IMR-90 (cell line): ENCODE measurements at regions of chr19 and their contacts with region 1.

Region 1: DNA sequence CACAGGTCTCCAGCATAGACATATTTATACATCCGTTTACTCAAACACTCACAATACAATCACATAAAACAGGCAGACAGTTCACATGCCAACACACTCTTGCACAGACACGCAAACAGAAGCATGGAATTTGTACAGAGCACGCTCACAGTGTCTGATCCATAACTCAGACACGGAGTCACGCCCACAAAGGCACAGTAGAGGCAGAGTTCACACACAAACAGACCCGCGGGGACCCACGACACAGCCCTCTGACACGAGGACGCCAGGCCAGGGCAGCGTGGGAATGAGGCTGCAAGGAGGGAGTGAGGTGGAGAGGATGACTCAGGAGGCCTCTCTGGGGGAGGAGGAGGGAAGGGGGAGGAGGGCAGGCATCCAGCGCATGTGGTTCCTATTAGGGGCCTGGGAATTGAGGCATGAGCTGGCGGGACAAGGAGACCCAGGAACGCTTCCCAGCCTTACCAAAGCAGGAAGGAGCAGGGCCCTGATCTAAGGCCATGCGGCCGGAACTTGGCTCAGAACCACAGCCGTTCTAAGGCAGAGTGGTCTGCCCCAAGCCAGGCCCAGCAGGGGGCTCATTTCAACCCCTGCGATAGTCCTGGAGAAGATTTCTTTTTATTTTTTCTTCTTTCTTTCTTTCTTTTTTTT is 9.1 kb upstream of the OLFM2 start:
- DNase-seq: peak; percentile 100
- ATAC-seq: peak; percentile 95
- H3K4me3 ChIP-seq: no peak overlapping the region
- H3K27ac ChIP-seq: peak overlapping the region; percentile 84
- H3K4me1 ChIP-seq: peaks cover 10% of the 10 kb centered on the region; the same call in 1 of the 2 replicates
- H3K27me3 ChIP-seq: no peaks in the 10 kb centered on the region
- CTCF ChIP-seq: peak; percentile 46
- POLR2A ChIP-seq: no peak
- RAD21 ChIP-seq: peak; percentile 35

Region 2: DNA sequence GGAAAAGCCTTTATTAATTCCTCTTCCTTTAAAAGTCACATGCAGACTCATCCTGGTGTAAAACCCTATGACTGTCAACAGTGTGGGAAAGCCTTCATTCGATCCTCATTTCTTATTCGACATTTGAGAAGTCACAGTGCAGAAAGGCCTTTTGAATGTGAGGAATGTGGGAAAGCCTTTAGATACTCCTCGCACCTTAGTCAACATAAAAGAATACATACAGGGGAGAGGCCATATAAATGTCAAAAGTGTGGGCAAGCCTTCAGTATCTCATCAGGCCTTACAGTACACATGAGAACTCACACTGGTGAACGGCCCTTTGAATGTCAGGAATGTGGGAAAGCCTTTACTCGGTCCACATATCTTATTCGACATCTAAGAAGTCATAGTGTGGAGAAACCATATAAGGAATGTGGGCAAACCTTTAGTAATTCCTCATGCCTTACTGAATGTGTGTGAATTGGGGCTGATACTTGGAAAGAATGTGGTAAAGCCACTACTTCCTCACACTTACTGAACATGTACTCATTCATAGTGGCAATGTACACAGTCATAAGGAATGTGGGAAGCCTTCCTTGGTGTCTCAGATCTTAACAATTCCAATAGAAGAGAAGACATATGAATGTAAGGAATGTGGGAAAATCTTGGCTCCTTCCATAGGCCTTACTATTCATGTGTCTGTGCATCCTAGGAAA is 602.7 kb before region 1 on chr19:
- CTCF ChIA-PET with region 1: no interaction called
- POLR2A ChIA-PET with region 1: no interaction called
- dilution Hi-C with region 1: no loop called
- in situ Hi-C with region 1: no loop called
- intact Hi-C with region 1: no loop called
- DNase-seq: no peak
- ATAC-seq: no peak
- H3K4me3 ChIP-seq: no peak overlapping the region
- H3K27ac ChIP-seq: no peak overlapping the region
- H3K4me1 ChIP-seq: no peaks in the 10 kb centered on the region
- H3K27me3 ChIP-seq: no peaks in the 10 kb centered on the region
- CTCF ChIP-seq: no peak
- POLR2A ChIP-seq: no peak
- RAD21 ChIP-seq: no peak

Region 3: GRCh38 chr19:9528757-9529336 is 416.6 kb before region 1 on chr19:
- CTCF ChIA-PET with region 1: no interaction called
- POLR2A ChIA-PET with region 1: no interaction called
- dilution Hi-C with region 1: no loop called
- in situ Hi-C with region 1: no loop called
- intact Hi-C with region 1: no loop called
- DNase-seq: peak; percentile 9
- ATAC-seq: no peak
- H3K4me3 ChIP-seq: no peak overlapping the region
- H3K27ac ChIP-seq: no peak overlapping the region
- H3K4me1 ChIP-seq: no peaks in the 10 kb centered on the region
- H3K27me3 ChIP-seq: no peaks in the 10 kb centered on the region
- CTCF ChIP-seq: no peak
- POLR2A ChIP-seq: no peak
- RAD21 ChIP-seq: no peak

Region 4: GRCh38 chr19:10155839-10156238 is 210.4 kb after region 1 on chr19:
- CTCF ChIA-PET with region 1: no interaction called
- POLR2A ChIA-PET with region 1: no interaction called
- dilution Hi-C with region 1: no loop called
- in situ Hi-C with region 1: no loop called
- intact Hi-C with region 1: no loop called
- DNase-seq: peak; percentile 34
- ATAC-seq: no peak
- H3K4me3 ChIP-seq: no peak overlapping the region
- H3K27ac ChIP-seq: no peak overlapping the region
- H3K4me1 ChIP-seq: no peaks in the 10 kb centered on the region
- H3K27me3 ChIP-seq: no peaks in the 10 kb centered on the region
- CTCF ChIP-seq: no peak
- POLR2A ChIP-seq: no peak
- RAD21 ChIP-seq: no peak

Region 5: DNA sequence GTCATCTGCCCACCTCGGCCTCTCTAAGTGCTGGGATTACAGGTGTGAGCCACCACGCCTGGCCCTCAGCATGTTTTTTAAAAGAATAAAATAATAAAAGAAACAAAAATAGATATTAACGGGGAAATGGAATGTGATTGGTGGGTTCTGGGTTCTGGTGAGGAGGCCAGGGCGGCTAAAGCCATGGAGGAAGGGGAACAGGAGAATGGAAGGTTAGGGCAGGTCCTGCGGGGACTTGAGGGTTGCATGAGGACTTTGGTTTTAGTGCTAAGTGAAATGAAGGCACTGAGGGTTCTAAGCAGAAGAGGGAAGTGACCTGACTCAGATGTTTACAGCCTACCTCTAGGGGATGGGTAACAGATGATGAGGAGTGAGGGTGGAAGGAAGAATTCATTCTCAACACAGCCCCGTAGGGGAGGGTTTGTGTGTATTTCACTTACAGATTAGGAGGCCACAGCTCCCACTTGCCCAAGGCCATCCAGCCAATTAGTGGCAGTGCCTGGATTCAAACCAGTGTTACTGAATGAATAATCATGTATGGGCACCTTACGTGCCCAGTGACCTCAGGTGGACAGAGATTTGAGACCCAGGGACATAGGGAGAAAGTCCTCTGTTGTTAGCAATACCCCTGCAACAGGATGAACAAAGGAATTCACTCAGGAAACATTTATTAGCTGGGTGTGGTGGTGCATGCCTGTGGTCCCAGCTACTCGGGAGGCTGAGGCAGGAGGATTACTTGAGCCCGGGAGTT is 299.9 kb after region 1 on chr19:
- CTCF ChIA-PET with region 1: no interaction called
- POLR2A ChIA-PET with region 1: no interaction called
- dilution Hi-C with region 1: no loop called
- in situ Hi-C with region 1: loop called (anchors 10 kb)
- intact Hi-C with region 1: no loop called
- DNase-seq: no peak
- ATAC-seq: no peak
- H3K4me3 ChIP-seq: no peak overlapping the region
- H3K27ac ChIP-seq: no peak overlapping the region
- H3K4me1 ChIP-seq: peaks cover 2% of the 10 kb centered on the region; the same call in 1 of the 2 replicates
- H3K27me3 ChIP-seq: no peaks in the 10 kb centered on the region
- CTCF ChIP-seq: no peak
- POLR2A ChIP-seq: no peak
- RAD21 ChIP-seq: no peak